Posterior vena cava (tissue), 2 donors: ENCODE measurements at regions of chr22 and their contacts with region 1.

Region 1: DNA sequence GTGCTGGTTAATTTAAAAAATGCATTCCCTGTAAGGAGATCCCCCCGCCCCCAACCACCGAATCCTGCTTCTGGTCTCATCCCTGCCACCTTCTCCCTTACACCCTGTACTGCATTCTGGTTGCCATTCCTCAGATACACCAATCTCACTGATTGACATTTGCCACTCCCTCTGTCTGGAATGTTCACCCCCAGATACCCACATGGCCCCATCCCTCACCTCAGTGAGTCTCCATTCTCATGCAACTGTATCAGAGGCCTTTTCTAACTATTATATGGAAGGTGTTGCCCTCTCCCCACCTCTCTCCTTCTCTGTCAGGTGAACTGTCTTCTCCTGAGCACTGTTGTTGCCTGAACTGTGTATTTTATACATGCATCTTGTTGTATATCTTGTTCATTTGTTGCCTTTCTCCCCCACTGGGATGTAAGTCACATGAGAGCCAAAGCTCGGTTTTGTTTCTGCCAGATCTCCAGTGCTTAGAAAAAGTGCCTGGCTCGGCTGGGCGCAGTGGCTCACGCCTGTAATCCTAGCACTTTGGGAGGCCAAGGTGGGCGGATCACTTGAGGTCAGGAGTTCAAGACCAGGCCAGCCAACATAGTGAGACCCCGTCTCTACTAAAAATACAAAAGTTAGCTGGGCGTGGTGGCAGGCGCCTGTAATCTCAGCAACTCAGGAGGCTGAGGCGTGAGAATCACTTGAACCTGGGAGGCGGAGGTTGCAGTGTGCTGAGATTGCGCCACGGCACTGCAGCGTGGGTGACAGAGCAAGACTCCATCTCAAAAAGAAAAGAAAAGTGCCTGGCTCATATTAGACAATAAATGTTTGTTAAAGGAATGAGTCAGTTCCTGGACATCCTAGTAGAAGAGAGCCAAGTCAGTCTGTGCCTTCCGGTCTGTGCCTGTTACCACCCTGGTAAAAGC is 61.0 kb downstream of the TNRC6B start:
- DNase-seq: no peak

Region 2: DNA sequence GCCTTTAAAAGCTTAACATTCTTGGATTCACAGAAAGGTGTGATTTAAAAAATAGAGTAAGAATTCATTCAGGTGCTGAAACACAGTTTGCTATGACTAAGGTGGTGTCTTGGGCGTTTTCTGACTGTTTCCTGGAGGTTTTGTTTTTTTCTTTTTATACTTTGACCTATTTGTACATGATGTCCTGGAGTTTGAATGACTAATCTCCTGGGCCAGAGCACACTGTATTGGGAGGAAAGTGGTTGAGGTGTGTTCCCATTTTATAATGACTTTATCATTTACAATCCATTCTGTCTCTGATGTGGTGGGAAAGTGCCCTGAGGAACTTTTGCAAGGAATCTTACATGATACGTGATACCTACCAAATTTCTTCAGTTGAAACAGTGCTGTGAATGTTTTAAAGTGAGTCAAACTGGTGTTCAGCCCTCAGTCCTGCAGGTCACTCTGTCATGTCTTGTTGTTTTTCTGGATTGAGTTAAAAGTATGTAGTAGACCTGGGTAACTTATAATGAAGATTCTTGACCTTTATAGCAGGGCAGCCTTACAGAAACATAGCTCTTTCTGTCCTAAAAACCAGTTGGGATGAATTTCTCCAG is 19.9 kb after region 1 on chr22:
- intact Hi-C with region 1: no loop called
- DNase-seq: no peak

Region 3: DNA sequence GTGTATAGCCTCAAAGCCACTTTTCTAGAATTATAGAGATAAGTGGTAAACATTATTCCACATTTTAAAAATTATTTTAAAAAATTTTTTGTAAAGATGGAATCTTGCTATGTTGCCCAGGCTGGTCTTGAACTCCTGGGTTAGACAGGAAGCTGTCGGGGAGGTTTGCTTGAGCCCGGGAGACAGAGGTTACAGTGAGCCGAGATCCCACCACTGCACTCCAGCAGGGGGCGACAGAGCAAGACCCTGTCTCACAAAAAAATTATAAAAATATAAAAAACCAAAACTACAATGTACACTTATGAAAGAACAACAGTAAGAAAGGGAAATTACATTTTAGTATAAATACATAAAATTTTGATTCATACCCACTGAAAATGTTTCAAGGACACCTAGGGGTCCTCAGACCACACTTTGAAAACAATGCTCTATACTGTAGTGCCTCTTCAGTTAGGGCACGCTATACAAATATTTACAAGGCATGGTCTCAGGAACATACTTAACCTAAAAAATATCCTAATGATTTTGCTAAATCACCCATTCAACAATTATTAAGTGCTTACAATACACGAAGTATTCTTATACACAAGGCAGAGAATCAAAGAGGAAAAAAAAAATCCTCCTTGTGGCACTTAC is 286.7 kb after region 1 on chr22:
- intact Hi-C with region 1: no loop called
- DNase-seq: no peak

Region 4: DNA sequence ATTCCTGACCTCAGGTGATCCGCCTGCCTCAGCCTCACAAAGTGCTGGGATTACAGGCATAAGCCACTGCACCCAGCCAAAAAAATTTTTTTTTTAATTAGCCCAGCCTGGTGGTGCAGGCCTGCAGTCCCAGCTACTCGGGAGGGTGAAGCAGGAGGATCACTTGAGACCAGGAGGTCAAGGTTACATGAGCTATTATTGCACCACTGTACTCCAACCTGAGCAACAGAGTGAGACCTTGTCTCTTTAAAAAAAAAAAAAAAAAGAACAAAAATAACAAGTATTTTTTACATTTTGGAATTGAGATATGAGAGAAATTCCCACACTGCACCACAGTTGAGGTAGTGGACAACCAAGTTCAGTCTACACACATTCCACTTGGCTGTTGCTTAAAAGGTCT is 952.8 kb after region 1 on chr22:
- intact Hi-C with region 1: loop called in 1 of 2 experiments (anchors 5 kb)
- DNase-seq: no peak